ENCODE measurements at regions of chr1 and their contacts with region 1.

Region 1: GRCh38 chr1:53278201-53278725 is 39.9 kb upstream of the MAGOH start:
- DNase-seq: peak; percentile 46
- H3K4me3 Mint-ChIP-seq: no peak overlapping the region
- H3K27ac Mint-ChIP-seq: peak overlapping the region; percentile 36
- H3K4me1 Mint-ChIP-seq: peaks cover 13% of the 10 kb centered on the region
- H3K27me3 Mint-ChIP-seq: no peaks in the 10 kb centered on the region
- CTCF ChIP-seq: peak; percentile 96

Region 2: DNA sequence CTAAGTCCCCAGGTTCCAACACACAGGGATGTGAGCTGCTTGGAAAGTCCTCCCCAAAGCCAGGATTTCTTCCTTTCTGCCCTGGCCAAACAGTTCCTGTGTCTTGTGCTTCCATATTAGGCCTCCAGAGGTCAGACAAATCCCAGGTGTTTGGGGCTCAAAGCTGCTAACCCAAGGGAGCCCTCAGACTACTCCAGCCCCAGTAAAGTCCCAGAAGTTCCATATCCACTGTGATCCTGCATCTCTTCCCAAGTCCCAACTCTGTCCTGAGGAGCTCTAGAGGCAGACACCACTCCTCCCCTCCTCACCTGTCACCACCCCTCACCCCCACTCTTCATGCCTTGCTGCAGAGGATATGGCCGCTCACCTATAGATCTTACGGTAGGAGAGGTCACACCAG is 12.2 kb before region 1 on chr1:
- CTCF ChIA-PET with region 1: interaction called, 13 read pairs
- POLR2A ChIA-PET with region 1: no interaction called
- intact Hi-C with region 1: no loop called
- DNase-seq: peak; percentile 34
- H3K4me3 Mint-ChIP-seq: no peak overlapping the region
- H3K27ac Mint-ChIP-seq: no peak overlapping the region
- H3K4me1 Mint-ChIP-seq: no peaks in the 10 kb centered on the region
- H3K27me3 Mint-ChIP-seq: no peaks in the 10 kb centered on the region
- CTCF ChIP-seq: peak; percentile 25

Region 3: GRCh38 chr1:53326088-53326597 is 47.9 kb after region 1 on chr1:
- CTCF ChIA-PET with region 1: interaction called, 11 read pairs
- POLR2A ChIA-PET with region 1: interaction called, 4 read pairs
- intact Hi-C with region 1: no loop called
- DNase-seq: peak; percentile 96
- H3K4me3 Mint-ChIP-seq: peak overlapping the region; percentile 82
- H3K27ac Mint-ChIP-seq: peak overlapping the region; percentile 95
- H3K4me1 Mint-ChIP-seq: no peaks in the 10 kb centered on the region
- H3K27me3 Mint-ChIP-seq: no peaks in the 10 kb centered on the region
- CTCF ChIP-seq: no peak

Region 4: GRCh38 chr1:53393325-53393792 is 115.1 kb after region 1 on chr1:
- CTCF ChIA-PET with region 1: interaction called, 227 read pairs
- POLR2A ChIA-PET with region 1: interaction called, 10 read pairs
- intact Hi-C with region 1: loop called (anchors 1 kb)
- DNase-seq: peak; percentile 80
- H3K4me3 Mint-ChIP-seq: no peak overlapping the region
- H3K27ac Mint-ChIP-seq: no peak overlapping the region
- H3K4me1 Mint-ChIP-seq: peaks cover 6% of the 10 kb centered on the region
- H3K27me3 Mint-ChIP-seq: peaks cover 13% of the 10 kb centered on the region
- CTCF ChIP-seq: peak; percentile 89

Region 5: GRCh38 chr1:53435151-53435550 is 156.9 kb after region 1 on chr1:
- CTCF ChIA-PET with region 1: interaction called, 11 read pairs
- POLR2A ChIA-PET with region 1: no interaction called
- intact Hi-C with region 1: no loop called
- DNase-seq: no peak
- H3K4me3 Mint-ChIP-seq: no peak overlapping the region
- H3K27ac Mint-ChIP-seq: no peak overlapping the region
- H3K4me1 Mint-ChIP-seq: no peaks in the 10 kb centered on the region
- H3K27me3 Mint-ChIP-seq: peaks cover 45% of the 10 kb centered on the region
- CTCF ChIP-seq: no peak

Region 6: DNA sequence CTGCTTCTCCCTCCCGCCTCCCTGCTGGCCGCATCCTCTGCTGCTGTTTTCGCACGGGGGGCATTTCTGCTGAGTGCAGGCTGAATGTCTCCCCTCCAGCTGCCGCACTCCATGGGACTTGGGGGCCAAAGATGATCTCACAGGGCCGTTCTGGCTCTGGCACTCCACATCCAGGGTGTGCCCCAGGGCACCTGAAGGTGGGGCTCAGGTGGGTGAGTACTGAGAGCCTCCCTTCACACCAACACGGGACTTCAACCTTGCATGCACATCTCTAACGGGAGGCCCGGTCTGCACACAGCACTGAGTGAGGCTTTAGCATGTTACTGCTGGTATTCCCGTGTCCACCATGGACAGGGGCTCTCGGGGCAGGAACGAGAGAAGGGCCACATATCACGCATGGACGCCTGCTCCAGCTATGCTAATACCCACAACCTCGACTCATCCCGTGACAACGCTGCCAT is 269.8 kb after region 1 on chr1:
- CTCF ChIA-PET with region 1: no interaction called
- POLR2A ChIA-PET with region 1: no interaction called
- intact Hi-C with region 1: no loop called
- DNase-seq: no peak
- H3K4me3 Mint-ChIP-seq: no peak overlapping the region
- H3K27ac Mint-ChIP-seq: no peak overlapping the region
- H3K4me1 Mint-ChIP-seq: no peaks in the 10 kb centered on the region
- H3K27me3 Mint-ChIP-seq: peaks cover 16% of the 10 kb centered on the region
- CTCF ChIP-seq: no peak